Sciatic nerve (tissue), 2 donors: ENCODE measurements at regions of chr9 and their contacts with region 1.

Region 1: DNA sequence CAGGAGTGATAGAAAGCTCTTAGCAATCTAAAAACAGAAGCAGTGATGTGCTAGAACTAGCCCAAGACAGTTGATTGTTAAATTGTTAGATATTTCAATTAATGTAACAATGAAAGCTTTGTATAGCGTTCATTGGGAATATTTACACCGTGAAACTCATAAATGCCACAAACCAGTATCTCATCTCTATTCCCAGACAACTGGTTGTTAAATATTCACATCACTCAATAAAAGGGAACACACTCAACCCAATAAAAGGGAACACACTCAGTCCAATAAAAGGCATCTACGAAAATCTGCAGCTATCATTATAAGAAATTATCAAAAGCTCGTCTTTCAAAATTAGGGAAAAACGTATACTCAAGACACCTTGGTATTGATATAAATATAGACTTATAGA is 270.9 kb downstream of the CYLC2 start:
- DNase-seq: no peak
- ATAC-seq: no peak

Region 2: GRCh38 chr9:103335461-103335860 is 69.4 kb after region 1 on chr9:
- intact Hi-C with region 1: loop called (anchors 2 kb)
- DNase-seq: no peak
- ATAC-seq: no peak